Calu3 (cell line): ENCODE measurements at regions of chr16 and their contacts with region 1.

Region 1: DNA sequence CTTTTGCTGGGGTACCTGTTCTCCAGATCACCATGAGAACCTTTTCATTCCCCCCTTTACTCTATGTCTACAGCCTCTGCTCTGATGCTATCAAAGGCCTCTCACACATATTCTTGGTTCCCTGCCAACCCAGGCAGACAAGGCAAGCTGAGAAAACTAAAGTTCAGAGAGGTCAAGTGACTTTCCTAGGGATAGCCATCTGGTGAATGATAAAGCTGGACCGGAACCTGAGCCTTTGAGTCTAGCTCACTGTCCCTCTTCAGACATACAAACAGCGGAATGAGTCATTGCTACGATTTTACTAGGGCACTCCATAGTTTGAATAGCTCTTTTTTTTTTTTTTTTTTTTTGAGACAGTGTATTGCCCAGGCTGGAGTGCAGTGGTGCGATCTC is 73.3 kb downstream of the XYLT1 start:
- DNase-seq: peak; percentile 35
- H3K4me3 Mint-ChIP-seq: no peak overlapping the region
- H3K27ac Mint-ChIP-seq: peak overlapping the region; percentile 69
- H3K4me1 Mint-ChIP-seq: peaks cover 27% of the 10 kb centered on the region
- H3K27me3 Mint-ChIP-seq: no peaks in the 10 kb centered on the region
- CTCF ChIP-seq: no peak

Region 2: DNA sequence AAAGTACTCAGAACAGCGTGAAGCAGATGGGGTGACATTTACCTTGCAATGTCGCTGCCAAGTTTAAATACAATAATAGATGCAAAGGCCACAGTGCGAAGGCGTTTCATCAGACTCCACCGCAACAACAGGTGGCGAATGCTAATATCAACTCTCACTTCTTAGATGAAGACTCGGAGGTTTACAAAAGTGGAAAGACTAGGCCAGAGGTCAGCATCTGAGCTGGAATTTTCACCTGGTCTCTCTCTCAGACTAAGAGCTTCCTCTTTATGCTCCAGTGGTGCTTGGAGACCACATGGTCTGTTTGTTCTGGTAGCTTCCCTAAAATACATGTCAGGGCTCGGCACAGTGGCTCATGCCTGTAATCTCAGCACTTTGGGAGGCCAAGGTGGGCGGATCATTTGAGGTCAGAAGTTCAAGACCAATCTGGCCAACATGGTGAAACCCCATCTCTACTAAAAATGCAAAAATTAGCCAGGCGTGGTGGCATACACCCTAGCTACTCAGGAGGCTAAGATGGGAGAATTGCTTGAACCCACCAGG is 95.8 kb before region 1 on chr16:
- CTCF ChIA-PET with region 1: no interaction called
- intact Hi-C with region 1: loop called (anchors 2 kb)
- DNase-seq: no peak
- H3K4me3 Mint-ChIP-seq: no peak overlapping the region
- H3K27ac Mint-ChIP-seq: no peak overlapping the region
- H3K4me1 Mint-ChIP-seq: peaks cover 51% of the 10 kb centered on the region
- H3K27me3 Mint-ChIP-seq: no peaks in the 10 kb centered on the region
- CTCF ChIP-seq: no peak

Region 3: DNA sequence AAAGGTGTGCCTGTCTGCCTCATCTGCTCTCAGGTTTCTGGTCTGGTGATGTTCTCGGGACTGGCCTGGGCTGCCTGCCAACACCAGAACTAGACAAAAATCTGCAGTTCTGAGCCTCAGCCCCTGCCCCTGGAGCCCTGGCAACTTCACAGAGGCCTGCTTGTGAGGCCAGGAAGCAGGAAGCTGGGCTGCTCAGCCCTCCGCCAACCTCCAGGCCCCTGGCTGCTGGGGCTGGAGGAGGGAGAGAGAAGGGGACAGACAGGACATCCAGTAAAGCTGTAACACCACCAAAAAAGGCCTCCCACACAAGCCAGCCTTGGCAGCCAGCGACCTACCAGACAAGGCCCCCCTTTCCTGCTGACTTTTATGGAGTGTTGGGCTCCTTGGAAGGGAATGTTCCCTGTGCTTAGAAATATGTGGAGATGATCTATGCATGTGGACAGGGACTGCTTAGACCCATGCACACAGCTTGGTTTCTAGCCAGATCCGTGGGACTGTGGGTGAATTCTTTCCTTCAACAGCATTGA is 84.3 kb before region 1 on chr16:
- CTCF ChIA-PET with region 1: interaction called, 3 read pairs
- intact Hi-C with region 1: loop called (anchors 2 kb)
- DNase-seq: peak; percentile 54
- H3K4me3 Mint-ChIP-seq: no peak overlapping the region
- H3K27ac Mint-ChIP-seq: no peak overlapping the region
- H3K4me1 Mint-ChIP-seq: peaks cover 20% of the 10 kb centered on the region
- H3K27me3 Mint-ChIP-seq: no peaks in the 10 kb centered on the region
- CTCF ChIP-seq: no peak

Region 4: GRCh38 chr16:17459530-17460521 is 62.3 kb after region 1 on chr16:
- CTCF ChIA-PET with region 1: no interaction called
- intact Hi-C with region 1: no loop called
- DNase-seq: no peak
- H3K4me3 Mint-ChIP-seq: no peak overlapping the region
- H3K27ac Mint-ChIP-seq: no peak overlapping the region
- H3K4me1 Mint-ChIP-seq: no peaks in the 10 kb centered on the region
- H3K27me3 Mint-ChIP-seq: no peaks in the 10 kb centered on the region
- CTCF ChIP-seq: no peak